Vagina (tissue), 2 donors: ENCODE measurements at regions of chr4 and their contacts with region 1.

Region 1: DNA sequence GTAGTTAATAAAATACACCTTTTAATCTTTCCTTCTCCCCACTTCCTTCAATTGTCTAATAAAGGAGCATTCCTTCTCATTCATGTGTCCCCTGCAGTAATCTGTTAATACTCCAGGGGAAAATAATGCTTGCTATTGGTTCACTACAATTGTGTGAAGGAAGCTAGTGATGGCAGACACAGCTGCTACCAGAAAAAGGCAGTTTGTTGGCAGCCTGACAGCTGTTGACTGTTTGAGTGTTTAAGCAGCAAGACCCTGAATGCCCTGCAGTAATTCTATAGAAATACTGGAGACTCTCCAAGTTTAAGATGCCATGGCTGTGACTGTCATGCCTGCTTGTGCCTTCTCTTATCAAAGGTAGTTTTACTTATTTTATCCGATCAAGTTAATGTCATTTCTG is 359.5 kb downstream of the C4orf33 start:
- DNase-seq: no peak
- H3K4me3 ChIP-seq: no peak overlapping the region
- H3K27ac ChIP-seq: no peak overlapping the region
- H3K4me1 ChIP-seq: no peaks in the 10 kb centered on the region
- H3K27me3 ChIP-seq: no peaks in the 10 kb centered on the region
- CTCF ChIP-seq: no peak
- POLR2A ChIP-seq: no peak

Region 2: DNA sequence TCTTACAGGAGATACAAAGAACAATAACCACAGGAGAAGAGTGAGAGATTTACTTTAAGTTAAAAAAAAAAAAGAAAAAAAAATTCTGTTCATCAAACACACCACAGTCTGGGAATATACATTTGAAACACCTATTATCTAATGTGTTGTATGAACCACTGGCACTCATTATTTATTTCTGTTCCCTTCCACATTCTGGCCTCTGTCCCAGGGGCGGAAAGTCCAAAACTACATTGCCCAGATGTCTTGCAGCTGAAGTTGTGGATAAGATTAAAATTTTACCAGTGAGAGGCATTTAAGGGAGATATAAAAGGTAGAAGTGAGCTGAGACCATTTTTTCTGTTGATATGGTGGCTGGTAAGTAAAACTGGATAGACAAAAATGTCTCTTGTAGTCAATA is 418.4 kb before region 1 on chr4:
- intact Hi-C with region 1: no loop called
- DNase-seq: no peak
- H3K4me3 ChIP-seq: no peak overlapping the region
- H3K27ac ChIP-seq: no peak overlapping the region
- H3K4me1 ChIP-seq: no peaks in the 10 kb centered on the region
- H3K27me3 ChIP-seq: no peaks in the 10 kb centered on the region
- CTCF ChIP-seq: no peak
- POLR2A ChIP-seq: no peak

Region 3: DNA sequence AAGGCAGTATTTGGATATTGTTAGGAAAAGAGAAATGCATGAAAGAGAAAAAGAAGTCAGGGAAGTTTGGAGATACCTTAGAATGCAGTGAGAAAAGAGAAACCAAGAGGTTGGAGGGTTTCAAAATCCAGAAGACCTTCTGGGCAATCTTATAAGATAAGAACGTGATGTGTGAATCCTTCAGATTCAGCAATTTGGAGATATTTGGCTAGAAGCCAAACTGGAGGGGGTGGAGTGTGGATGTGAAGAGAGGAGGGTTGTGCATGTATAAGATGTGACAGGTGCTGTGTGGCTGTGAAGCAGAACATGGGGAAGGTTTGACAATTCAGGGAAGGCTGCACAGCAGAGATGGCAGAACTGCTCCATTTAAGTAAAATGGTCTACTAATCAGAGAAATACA is 47.0 kb after region 1 on chr4:
- intact Hi-C with region 1: loop called (anchors 2 kb)
- DNase-seq: no peak
- H3K4me3 ChIP-seq: no peak overlapping the region
- H3K27ac ChIP-seq: no peak overlapping the region
- H3K4me1 ChIP-seq: no peaks in the 10 kb centered on the region
- H3K27me3 ChIP-seq: no peaks in the 10 kb centered on the region
- CTCF ChIP-seq: no peak
- POLR2A ChIP-seq: no peak

Region 4: GRCh38 chr4:130293692-130294091 is 838.2 kb after region 1 on chr4:
- intact Hi-C with region 1: loop called (anchors 5 kb)
- DNase-seq: no peak
- H3K4me3 ChIP-seq: no peak overlapping the region
- H3K27ac ChIP-seq: no peak overlapping the region
- H3K4me1 ChIP-seq: no peaks in the 10 kb centered on the region
- H3K27me3 ChIP-seq: no peaks in the 10 kb centered on the region
- CTCF ChIP-seq: no peak
- POLR2A ChIP-seq: no peak